Endothelial cell of umbilical vein (primary cell): ENCODE measurements at regions of chr10 and their contacts with region 1.

Region 1: DNA sequence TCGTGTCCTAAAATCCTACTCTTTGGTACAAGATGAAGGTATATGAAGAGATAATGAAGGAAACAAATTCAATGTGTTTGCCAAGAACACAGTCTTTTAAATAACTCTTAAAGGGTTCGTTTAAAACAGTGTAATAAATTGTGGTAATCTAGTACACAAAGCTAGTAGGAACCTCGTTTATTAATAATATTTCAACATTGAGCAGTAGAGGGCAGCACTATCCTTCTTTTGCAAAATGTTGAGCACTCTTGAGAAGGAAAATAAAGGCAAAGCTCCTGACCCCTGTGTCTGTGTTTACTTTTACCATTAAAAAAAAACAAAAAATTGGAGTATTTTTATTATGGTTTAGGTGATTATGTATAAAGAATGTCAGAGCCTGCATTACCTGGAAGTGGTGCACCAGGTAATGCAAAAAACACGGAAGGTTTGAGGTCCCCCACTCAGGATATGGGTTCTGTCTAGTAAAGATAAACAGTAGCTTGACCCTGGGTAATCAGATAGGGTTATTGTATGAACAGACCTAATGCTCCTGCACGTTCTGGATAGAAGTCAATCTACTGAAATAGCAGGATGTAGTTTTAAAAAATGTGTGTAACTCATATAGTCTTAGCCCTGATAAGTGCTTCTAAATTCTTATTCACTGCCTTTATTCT is 5.7 kb upstream of the GOT1 start:
- DNase-seq: peak; percentile 64
- H3K4me3 ChIP-seq: no peak overlapping the region
- H3K27ac ChIP-seq: no peak overlapping the region
- H3K4me1 ChIP-seq: peaks cover 7% of the 10 kb centered on the region
- H3K27me3 ChIP-seq: no peaks in the 10 kb centered on the region
- CTCF ChIP-seq: peak; percentile 21 to 23
- POLR2A ChIP-seq: no peak

Region 2: GRCh38 chr10:98967601-98968000 is 468.5 kb before region 1 on chr10:
- CTCF ChIA-PET with region 1: no interaction called
- POLR2A ChIA-PET with region 1: no interaction called
- dilution Hi-C with region 1: no loop called
- intact Hi-C with region 1: no loop called
- DNase-seq: no peak
- H3K4me3 ChIP-seq: no peak overlapping the region
- H3K27ac ChIP-seq: no peak overlapping the region
- H3K4me1 ChIP-seq: no peaks in the 10 kb centered on the region
- H3K27me3 ChIP-seq: no peaks in the 10 kb centered on the region
- CTCF ChIP-seq: no peak
- POLR2A ChIP-seq: no peak

Region 3: GRCh38 chr10:99403674-99404073 is 32.4 kb before region 1 on chr10:
- CTCF ChIA-PET with region 1: interaction called, 14 read pairs
- POLR2A ChIA-PET with region 1: no interaction called
- dilution Hi-C with region 1: no loop called
- intact Hi-C with region 1: no loop called
- DNase-seq: peak; percentile 78
- H3K4me3 ChIP-seq: no peak overlapping the region
- H3K27ac ChIP-seq: peak overlapping the region; percentile 64
- H3K4me1 ChIP-seq: peaks cover 14% of the 10 kb centered on the region
- H3K27me3 ChIP-seq: no peaks in the 10 kb centered on the region
- CTCF ChIP-seq: no peak
- POLR2A ChIP-seq: no peak

Region 4: GRCh38 chr10:99484603-99485581 is 48.8 kb after region 1 on chr10:
- CTCF ChIA-PET with region 1: interaction called, 11 read pairs
- POLR2A ChIA-PET with region 1: no interaction called
- dilution Hi-C with region 1: no loop called
- intact Hi-C with region 1: no loop called
- DNase-seq: no peak
- H3K4me3 ChIP-seq: no peak overlapping the region
- H3K27ac ChIP-seq: no peak overlapping the region
- H3K4me1 ChIP-seq: no peaks in the 10 kb centered on the region
- H3K27me3 ChIP-seq: peaks cover 20 to 38% of the 10 kb centered on the region in 2 experiments
- CTCF ChIP-seq: no peak
- POLR2A ChIP-seq: no peak

Region 5: DNA sequence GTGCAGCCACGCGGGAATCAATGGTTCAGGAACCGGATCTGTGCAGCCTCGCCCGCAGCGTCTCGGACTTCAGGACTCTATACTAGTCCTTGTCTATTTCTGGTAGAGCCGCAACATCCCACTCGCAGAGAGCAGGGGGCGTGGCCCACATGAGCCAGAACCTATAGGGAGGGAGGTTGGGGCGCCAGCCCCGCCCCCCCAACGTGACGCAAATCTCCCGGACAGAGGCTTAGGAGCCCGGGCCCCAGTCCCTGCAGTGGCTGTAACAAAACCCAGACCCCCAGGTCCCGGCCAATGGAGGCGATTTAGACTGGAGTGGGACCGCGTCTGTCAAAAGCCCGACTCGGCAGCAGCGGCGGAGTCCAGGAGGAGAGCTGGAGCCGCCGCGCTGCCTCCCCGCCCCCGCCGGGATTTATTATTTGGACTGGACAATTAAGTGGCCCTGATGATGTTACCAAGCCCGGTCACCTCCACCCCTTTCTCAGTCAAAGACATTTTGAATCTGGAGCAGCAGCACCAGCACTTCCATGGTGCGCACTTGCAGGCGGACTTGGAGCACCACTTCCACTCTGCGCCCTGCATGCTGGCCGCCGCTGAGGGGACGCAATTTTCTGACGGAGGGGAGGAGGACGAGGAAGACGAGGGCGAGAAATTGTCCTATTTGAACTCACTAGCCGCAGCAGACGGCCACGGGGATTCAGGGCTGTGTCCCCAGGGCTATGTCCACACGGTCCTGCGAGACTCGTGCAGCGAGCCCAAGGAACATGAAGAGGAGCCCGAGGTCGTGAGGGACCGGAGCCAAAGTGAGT is 96.8 kb after region 1 on chr10 and contains the start of gene NKX2-3:
- CTCF ChIA-PET with region 1: interaction called, 41 read pairs
- POLR2A ChIA-PET with region 1: no interaction called
- dilution Hi-C with region 1: no loop called
- intact Hi-C with region 1: loop called (anchors 5 kb)
- DNase-seq: peak; percentile 40
- H3K4me3 ChIP-seq: no peak within 1 kb of the TSS
- H3K27ac ChIP-seq: no peak within 1 kb of the TSS
- H3K4me1 ChIP-seq: no peaks in the 10 kb centered on the region
- H3K27me3 ChIP-seq: peaks cover 93 to 97% of the 10 kb centered on the region in 2 experiments
- CTCF ChIP-seq: no peak
- POLR2A ChIP-seq: no peak
- total RNA-seq, gene NKX2-3: not detected in 2 replicates

Region 6: GRCh38 chr10:99595770-99596465 is 159.8 kb after region 1 on chr10:
- CTCF ChIA-PET with region 1: interaction called, 14 read pairs
- POLR2A ChIA-PET with region 1: no interaction called
- dilution Hi-C with region 1: loop called (anchors 25 kb)
- intact Hi-C with region 1: no loop called
- DNase-seq: no peak
- H3K4me3 ChIP-seq: no peak overlapping the region
- H3K27ac ChIP-seq: no peak overlapping the region
- H3K4me1 ChIP-seq: no peaks in the 10 kb centered on the region
- H3K27me3 ChIP-seq: peaks cover 2 to 9% of the 10 kb centered on the region in 2 experiments
- CTCF ChIP-seq: no peak
- POLR2A ChIP-seq: no peak

Region 7: GRCh38 chr10:99711129-99711719 is 275.1 kb after region 1 on chr10:
- CTCF ChIA-PET with region 1: interaction called, 13 read pairs
- POLR2A ChIA-PET with region 1: no interaction called
- dilution Hi-C with region 1: no loop called
- intact Hi-C with region 1: loop called (anchors 5 kb)
- DNase-seq: peak; percentile 67
- H3K4me3 ChIP-seq: no peak overlapping the region
- H3K27ac ChIP-seq: no peak overlapping the region
- H3K4me1 ChIP-seq: no peaks in the 10 kb centered on the region
- H3K27me3 ChIP-seq: no peaks in the 10 kb centered on the region
- CTCF ChIP-seq: peak; percentile 36 to 46
- POLR2A ChIP-seq: no peak